PC-9 (cell line): ENCODE measurements at regions of chr2 and their contacts with region 1.

Region 1: GRCh38 chr2:85162746-85163301 is 29.6 kb downstream of the TCF7L1 start:
- DNase-seq: no peak
- H3K4me3 ChIP-seq: no peak overlapping the region
- H3K27ac ChIP-seq: no peak overlapping the region
- H3K4me1 ChIP-seq: no peaks in the 10 kb centered on the region
- H3K27me3 ChIP-seq: no peaks in the 10 kb centered on the region
- CTCF ChIP-seq: no peak

Region 2: GRCh38 chr2:85132834-85133637 is 29.8 kb before region 1 on chr2 and contains the start of gene TCF7L1:
- CTCF ChIA-PET with region 1: no interaction called
- POLR2A ChIA-PET with region 1: no interaction called
- intact Hi-C with region 1: no loop called
- DNase-seq: peak in 1 of 2 experiments; percentile 67
- H3K4me3 ChIP-seq: peak within 1 kb of the TSS; percentile 62
- H3K27ac ChIP-seq: no peak within 1 kb of the TSS
- H3K4me1 ChIP-seq: peaks cover 7% of the 10 kb centered on the region
- H3K27me3 ChIP-seq: no peaks in the 10 kb centered on the region
- CTCF ChIP-seq: peak; percentile 72
- total RNA-seq, gene TCF7L1: 2.3 and 2.8 TPM in 2 replicates

Region 3: GRCh38 chr2:85221067-85221691 is 58.4 kb after region 1 on chr2:
- CTCF ChIA-PET with region 1: no interaction called
- POLR2A ChIA-PET with region 1: no interaction called
- intact Hi-C with region 1: loop called (anchors 10 kb)
- DNase-seq: no peak
- H3K4me3 ChIP-seq: no peak overlapping the region
- H3K27ac ChIP-seq: no peak overlapping the region
- H3K4me1 ChIP-seq: 0 out of 2 replicates have a peak, but pooled peaks cover 6% of the 10 kb centered on the region
- H3K27me3 ChIP-seq: no peaks in the 10 kb centered on the region; the same call in none of the 2 replicates
- CTCF ChIP-seq: no peak